ENCODE measurements at regions of chrX and their contacts with region 1.

Region 1: DNA sequence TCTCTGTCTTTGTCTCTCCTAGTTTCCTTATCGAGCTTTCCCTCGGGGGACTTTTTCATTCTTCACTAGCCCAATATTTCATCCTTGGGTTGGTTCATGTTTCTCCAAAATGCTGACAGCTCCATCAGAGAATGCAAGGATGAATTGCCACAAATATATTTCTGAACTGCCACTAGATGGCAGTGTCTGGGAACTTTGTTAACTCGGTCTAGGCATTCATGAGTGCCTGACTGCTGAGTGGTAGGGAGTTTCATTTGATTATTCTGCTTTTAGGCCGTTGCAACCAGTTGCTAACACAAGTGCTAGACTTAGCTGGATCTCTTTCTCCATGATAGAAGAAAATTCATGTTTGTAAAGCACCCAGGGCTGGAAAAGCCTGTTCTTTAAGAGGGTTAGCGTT is 73.5 kb upstream of the RAP2C start:
- DNase-seq: peak; percentile 21 to 45
- H3K4me3 ChIP-seq: no peak overlapping the region
- H3K27ac ChIP-seq: no peak overlapping the region
- H3K4me1 ChIP-seq: no peaks in the 10 kb centered on the region
- H3K27me3 ChIP-seq: no peaks in the 10 kb centered on the region
- CTCF ChIP-seq: peak; percentile 83

Region 2: GRCh38 chrX:131841496-131842410 is 451.0 kb before region 1 on chrX:
- CTCF ChIA-PET with region 1: interaction called, 3 read pairs
- POLR2A ChIA-PET with region 1: no interaction called
- intact Hi-C with region 1: loop called (anchors 10 kb)
- DNase-seq: peak; percentile 45 to 78
- H3K4me3 ChIP-seq: peak overlapping the region; percentile 25; the same call in 1 of the 2 replicates
- H3K27ac ChIP-seq: no peak overlapping the region
- H3K4me1 ChIP-seq: peaks cover 11% of the 10 kb centered on the region
- H3K27me3 ChIP-seq: no peaks in the 10 kb centered on the region
- CTCF ChIP-seq: peak; percentile 96

Region 3: GRCh38 chrX:132226169-132226568 is 66.6 kb before region 1 on chrX:
- CTCF ChIA-PET with region 1: interaction called, 5 read pairs
- POLR2A ChIA-PET with region 1: no interaction called
- intact Hi-C with region 1: loop called (anchors 5 kb)
- DNase-seq: no peak
- H3K4me3 ChIP-seq: no peak overlapping the region
- H3K27ac ChIP-seq: no peak overlapping the region
- H3K4me1 ChIP-seq: peaks cover 22% of the 10 kb centered on the region
- H3K27me3 ChIP-seq: no peaks in the 10 kb centered on the region
- CTCF ChIP-seq: peak; percentile 80

Region 4: GRCh38 chrX:132488819-132489577 is 196.2 kb after region 1 on chrX and contains the start of gene MBNL3:
- CTCF ChIA-PET with region 1: no interaction called
- POLR2A ChIA-PET with region 1: interaction called, 4 read pairs
- intact Hi-C with region 1: loop called (anchors 5 kb)
- DNase-seq: peak; percentile 72 to 86
- H3K4me3 ChIP-seq: peak within 1 kb of the TSS; percentile 93
- H3K27ac ChIP-seq: peak within 1 kb of the TSS; percentile 75
- H3K4me1 ChIP-seq: peaks cover 27% of the 10 kb centered on the region
- H3K27me3 ChIP-seq: no peaks in the 10 kb centered on the region
- CTCF ChIP-seq: no peak
- total RNA-seq, gene MBNL3: 24.4 and 36.1 TPM in 2 replicates

Region 5: GRCh38 chrX:133810925-133811324 is 1518.1 kb after region 1 on chrX:
- CTCF ChIA-PET with region 1: no interaction called
- POLR2A ChIA-PET with region 1: no interaction called
- intact Hi-C with region 1: no loop called
- DNase-seq: no peak
- H3K4me3 ChIP-seq: no peak overlapping the region
- H3K27ac ChIP-seq: no peak overlapping the region
- H3K4me1 ChIP-seq: no peaks in the 10 kb centered on the region
- H3K27me3 ChIP-seq: no peaks in the 10 kb centered on the region
- CTCF ChIP-seq: no peak

Measured in PC-9 (cell line).